ENCODE measurements at regions of chr11 and their contacts with region 1.

Region 1: GRCh38 chr11:119525180-119525866 is 102.4 kb upstream of the THY1 start:
- DNase-seq: no peak
- H3K4me3 ChIP-seq: no peak overlapping the region
- H3K27ac ChIP-seq: no peak overlapping the region
- H3K4me1 ChIP-seq: no peaks in the 10 kb centered on the region; a peak in 1 of 7 replicates
- H3K27me3 ChIP-seq: no peaks in the 10 kb centered on the region
- CTCF ChIP-seq: no peak
- EP300 ChIP-seq: no peak
- POLR2A ChIP-seq: no peak
- RAD21 ChIP-seq: no peak

Region 2: GRCh38 chr11:119509969-119510401 is 15.3 kb before region 1 on chr11:
- CTCF ChIA-PET with region 1: interaction called, 22 read pairs
- POLR2A ChIA-PET with region 1: no interaction called
- DNase-seq: no peak
- H3K4me3 ChIP-seq: no peak overlapping the region
- H3K27ac ChIP-seq: no peak overlapping the region
- H3K4me1 ChIP-seq: peaks cover 0 to 6% (median 1%) of the 10 kb centered on the region in 4 experiments; a peak in 3 of 7 replicates
- H3K27me3 ChIP-seq: no peaks in the 10 kb centered on the region
- CTCF ChIP-seq: no peak
- EP300 ChIP-seq: no peak
- POLR2A ChIP-seq: no peak
- RAD21 ChIP-seq: no peak

Region 3: GRCh38 chr11:119634301-119634700 is 109.0 kb after region 1 on chr11:
- CTCF ChIA-PET with region 1: no interaction called
- POLR2A ChIA-PET with region 1: no interaction called
- DNase-seq: no peak
- H3K4me3 ChIP-seq: no peak overlapping the region
- H3K27ac ChIP-seq: no peak overlapping the region
- H3K4me1 ChIP-seq: no peaks in the 10 kb centered on the region; a peak in 1 of 7 replicates
- H3K27me3 ChIP-seq: no peaks in the 10 kb centered on the region; a peak in 2 of 7 replicates
- CTCF ChIP-seq: no peak
- EP300 ChIP-seq: no peak
- POLR2A ChIP-seq: no peak
- RAD21 ChIP-seq: no peak

Measured in H1 (cell line).